ENCODE measurements at regions of chr7 and their contacts with region 1.

Region 1: DNA sequence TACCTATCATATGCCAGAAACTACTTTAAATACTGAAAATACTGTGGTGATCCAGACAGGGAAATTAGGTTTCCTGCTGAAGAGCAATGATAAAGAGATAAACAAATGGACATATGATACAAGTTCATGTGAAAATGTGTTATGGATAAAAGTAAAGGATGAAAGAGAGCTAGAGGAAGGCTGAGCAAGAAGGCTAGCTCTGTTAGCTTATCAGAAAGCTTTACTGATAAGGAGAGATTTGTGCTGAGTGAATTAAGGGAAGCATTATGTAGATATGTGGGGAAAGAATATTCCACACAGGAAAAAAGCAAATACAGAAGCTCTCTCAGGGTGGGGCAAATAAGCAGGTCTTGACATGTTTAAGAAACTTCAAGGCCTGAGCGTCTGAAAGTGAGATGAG is 308.4 kb downstream of the HDAC9 start:
- DNase-seq: no peak
- H3K4me3 Mint-ChIP-seq: no peak overlapping the region
- H3K27ac Mint-ChIP-seq: no peak overlapping the region
- H3K4me1 Mint-ChIP-seq: no peaks in the 10 kb centered on the region
- H3K27me3 Mint-ChIP-seq: no peaks in the 10 kb centered on the region

Region 2: GRCh38 chr7:18866359-18867036 is 62.6 kb after region 1 on chr7:
- intact Hi-C with region 1: loop called (anchors 10 kb)
- DNase-seq: no peak
- H3K4me3 Mint-ChIP-seq: no peak overlapping the region
- H3K27ac Mint-ChIP-seq: peak overlapping the region; percentile 66
- H3K4me1 Mint-ChIP-seq: peaks cover 9% of the 10 kb centered on the region
- H3K27me3 Mint-ChIP-seq: no peaks in the 10 kb centered on the region

Measured in activated T-helper 2 cell treated with anti-CD3 and anti-CD28 coated beads, Interferon-gamma antibody, Interleukin-2, Interleukin-4, amounts not matched to agents 10 μg/mL and 5 μg/mL and 100 μg/mL, durations not matched to agents 14 hours and 24 hours and 36 hours (primary cell).